ENCODE measurements at regions of chr11 and their contacts with region 1.

Region 1: DNA sequence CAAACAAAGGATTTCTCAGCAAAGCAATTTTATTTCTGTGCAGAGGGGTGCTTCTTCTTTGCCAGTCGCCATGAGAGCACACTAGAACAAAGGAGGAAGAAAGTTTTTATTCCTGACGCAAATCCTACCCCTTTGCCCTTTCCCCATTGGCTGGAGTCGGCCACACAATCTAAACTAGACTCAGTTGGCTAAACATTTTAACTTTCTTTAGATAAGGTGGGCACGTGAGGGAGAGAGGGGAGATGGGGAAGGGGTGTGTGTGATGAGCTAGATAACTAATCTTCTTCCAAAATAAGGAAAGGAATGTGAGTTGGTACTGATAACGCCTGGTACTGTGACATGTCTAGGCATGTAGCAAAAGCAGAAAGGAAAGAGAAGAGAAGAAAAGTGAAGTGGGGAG is 626 bp downstream of the TRIM22 start:
- DNase-seq: no peak
- ATAC-seq: no peak
- H3K4me3 ChIP-seq: peak overlapping the region; percentile 81
- H3K4me3 Mint-ChIP-seq: peak overlapping the region; percentile 93 to 100 (median 98)
- H3K27ac ChIP-seq: peak overlapping the region; percentile 93
- H3K27ac Mint-ChIP-seq: peak overlapping the region; percentile 95 to 100 (median 97)
- H3K4me1 ChIP-seq: peaks cover 29 to 40% of the 10 kb centered on the region in 2 donors
- H3K4me1 Mint-ChIP-seq: peaks cover 38 to 68% (median 57%) of the 10 kb centered on the region in 7 donors
- H3K27me3 ChIP-seq: no peaks in the 10 kb centered on the region
- H3K27me3 Mint-ChIP-seq: no peaks in the 10 kb centered on the region

Region 2: GRCh38 chr11:5703741-5704536 is 13.7 kb after region 1 on chr11:
- CTCF ChIA-PET with region 1: interaction called, 14 read pairs
- POLR2A ChIA-PET with region 1: interaction called, 18 read pairs
- intact Hi-C with region 1: loop called (anchors 1 to 2 kb)
- DNase-seq: no peak
- ATAC-seq: no peak
- H3K4me3 ChIP-seq: no peak overlapping the region
- H3K4me3 Mint-ChIP-seq: peak overlapping the region in 1 of 10 donors; percentile 42
- H3K27ac ChIP-seq: no peak overlapping the region
- H3K27ac Mint-ChIP-seq: peak overlapping the region in 7 of 9 donors; percentile 9 to 82 (median 61)
- H3K4me1 ChIP-seq: peaks cover 5 to 22% of the 10 kb centered on the region in 2 donors
- H3K4me1 Mint-ChIP-seq: peaks cover 11 to 53% (median 41%) of the 10 kb centered on the region in 7 donors
- H3K27me3 ChIP-seq: no peaks in the 10 kb centered on the region
- H3K27me3 Mint-ChIP-seq: no peaks in the 10 kb centered on the region

Region 3: GRCh38 chr11:5712507-5712906 is 22.3 kb after region 1 on chr11:
- CTCF ChIA-PET with region 1: interaction called, 13 read pairs
- POLR2A ChIA-PET with region 1: interaction called, 22 read pairs
- intact Hi-C with region 1: loop called (anchors 1 to 2 kb)
- DNase-seq: peak in 3 of 9 donors; percentile 8 to 33 (median 22)
- ATAC-seq: peak; percentile 42
- H3K4me3 ChIP-seq: no peak overlapping the region
- H3K4me3 Mint-ChIP-seq: no peak overlapping the region
- H3K27ac ChIP-seq: no peak overlapping the region
- H3K27ac Mint-ChIP-seq: peak overlapping the region in 7 of 9 donors; percentile 6 to 83 (median 19)
- H3K4me1 ChIP-seq: no peaks in the 10 kb centered on the region
- H3K4me1 Mint-ChIP-seq: peaks cover 0 to 13% (median 4%) of the 10 kb centered on the region in 7 donors
- H3K27me3 ChIP-seq: no peaks in the 10 kb centered on the region
- H3K27me3 Mint-ChIP-seq: no peaks in the 10 kb centered on the region